Activated naive CD4-positive, alpha-beta T cell treated with anti-CD3 and anti-CD28 coated beads for 36 hours (primary cell): ENCODE measurements at regions of chr12 and their contacts with region 1.

Region 1: GRCh38 chr12:67698672-67699581 is 50.4 kb downstream of the DYRK2 start:
- DNase-seq: peak; percentile 74
- H3K4me3 Mint-ChIP-seq: peak overlapping the region; percentile 28
- H3K27ac Mint-ChIP-seq: peak overlapping the region; percentile 64
- H3K4me1 Mint-ChIP-seq: peaks cover 51% of the 10 kb centered on the region
- H3K27me3 Mint-ChIP-seq: no peaks in the 10 kb centered on the region

Region 2: GRCh38 chr12:67482751-67483671 is 215.9 kb before region 1 on chr12:
- CTCF ChIA-PET with region 1: no interaction called
- intact Hi-C with region 1: loop called (anchors 1 kb)
- DNase-seq: peak; percentile 95
- H3K4me3 Mint-ChIP-seq: no peak overlapping the region
- H3K27ac Mint-ChIP-seq: no peak overlapping the region
- H3K4me1 Mint-ChIP-seq: peaks cover 40% of the 10 kb centered on the region
- H3K27me3 Mint-ChIP-seq: no peaks in the 10 kb centered on the region

Region 3: GRCh38 chr12:67592216-67593011 is 106.5 kb before region 1 on chr12:
- CTCF ChIA-PET with region 1: no interaction called
- intact Hi-C with region 1: loop called (anchors 2 kb)
- DNase-seq: peak; percentile 32
- H3K4me3 Mint-ChIP-seq: no peak overlapping the region
- H3K27ac Mint-ChIP-seq: peak overlapping the region; percentile 22
- H3K4me1 Mint-ChIP-seq: peaks cover 49% of the 10 kb centered on the region
- H3K27me3 Mint-ChIP-seq: no peaks in the 10 kb centered on the region

Region 4: DNA sequence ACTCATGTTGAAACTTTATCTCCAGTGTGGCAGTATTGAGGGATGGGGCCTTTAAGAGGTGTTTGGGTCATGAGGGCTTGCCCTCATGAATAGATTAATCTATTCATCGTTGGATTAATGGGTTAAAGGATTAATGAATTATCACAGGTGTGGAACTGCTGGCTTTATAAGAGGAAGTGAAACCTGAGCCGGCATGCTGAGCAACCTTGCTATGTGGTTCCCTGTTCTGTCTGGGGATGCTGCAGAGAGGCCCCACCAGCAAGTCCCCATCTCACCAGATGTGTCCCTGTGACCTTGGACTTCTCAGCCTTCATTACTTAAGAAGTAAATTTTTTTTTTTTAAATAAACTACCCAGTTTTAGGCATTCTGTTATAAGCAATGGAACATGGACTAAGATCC is 59.2 kb after region 1 on chr12:
- CTCF ChIA-PET with region 1: no interaction called
- intact Hi-C with region 1: loop called (anchors 1 kb)
- DNase-seq: peak; percentile 9
- H3K4me3 Mint-ChIP-seq: no peak overlapping the region
- H3K27ac Mint-ChIP-seq: no peak overlapping the region
- H3K4me1 Mint-ChIP-seq: peaks cover 49% of the 10 kb centered on the region
- H3K27me3 Mint-ChIP-seq: no peaks in the 10 kb centered on the region

Region 5: DNA sequence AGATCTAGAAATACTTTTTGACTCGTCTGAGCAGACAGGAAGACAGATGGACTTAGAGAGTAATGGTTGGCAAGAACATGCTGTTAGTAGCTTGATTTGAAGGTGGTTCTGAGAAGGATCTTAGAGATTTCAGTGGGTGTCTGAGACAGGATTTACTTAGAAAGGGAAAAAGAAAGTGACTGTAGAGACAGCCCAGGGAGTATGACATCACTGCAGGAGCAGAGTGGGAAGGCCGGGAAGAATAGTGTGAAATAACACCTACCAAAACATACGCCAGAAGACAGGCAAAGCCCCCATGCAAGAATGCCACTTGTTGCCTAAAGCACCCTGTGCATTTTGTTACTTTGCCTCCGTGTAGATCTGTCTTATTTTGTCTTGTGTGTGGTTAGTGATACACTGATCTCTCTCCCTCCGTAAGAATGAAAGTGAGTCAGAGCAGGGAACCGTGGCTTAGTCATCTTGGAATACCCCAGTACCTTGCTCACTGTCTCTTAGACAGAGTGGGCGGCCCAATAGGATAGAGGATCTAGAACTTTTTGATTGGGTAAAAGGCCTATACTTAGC is 129.0 kb after region 1 on chr12:
- CTCF ChIA-PET with region 1: no interaction called
- intact Hi-C with region 1: loop called (anchors 1 kb)
- DNase-seq: peak; percentile 79
- H3K4me3 Mint-ChIP-seq: peak overlapping the region; percentile 30
- H3K27ac Mint-ChIP-seq: peak overlapping the region; percentile 65
- H3K4me1 Mint-ChIP-seq: peaks cover 11% of the 10 kb centered on the region
- H3K27me3 Mint-ChIP-seq: no peaks in the 10 kb centered on the region

Region 6: GRCh38 chr12:67919406-67919805 is 220.5 kb after region 1 on chr12:
- CTCF ChIA-PET with region 1: no interaction called
- intact Hi-C with region 1: no loop called
- DNase-seq: no peak
- H3K4me3 Mint-ChIP-seq: no peak overlapping the region
- H3K27ac Mint-ChIP-seq: no peak overlapping the region
- H3K4me1 Mint-ChIP-seq: peaks cover 6% of the 10 kb centered on the region
- H3K27me3 Mint-ChIP-seq: no peaks in the 10 kb centered on the region

Region 7: DNA sequence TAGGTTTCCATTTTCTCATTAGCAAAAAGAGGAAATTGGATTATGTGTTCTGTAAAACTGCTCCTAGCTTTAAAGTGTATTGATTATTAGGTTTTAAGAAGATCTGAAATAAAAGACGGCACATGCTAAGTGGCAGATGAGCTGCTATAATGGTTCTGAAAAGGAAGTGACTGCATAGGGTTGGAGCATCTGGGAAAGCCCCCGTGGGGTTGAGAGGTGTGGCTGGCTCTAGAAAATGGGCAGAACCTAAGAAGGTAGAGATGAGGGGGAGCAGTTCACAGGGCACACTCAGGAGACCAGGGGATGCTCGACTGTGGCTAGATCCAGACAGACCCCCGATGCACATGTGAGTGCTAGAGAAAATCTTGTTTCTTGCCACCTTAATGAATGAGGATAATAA is 292.2 kb after region 1 on chr12:
- CTCF ChIA-PET with region 1: no interaction called
- intact Hi-C with region 1: loop called (anchors 2 kb)
- DNase-seq: peak; percentile 74
- H3K4me3 Mint-ChIP-seq: peak overlapping the region; percentile 55
- H3K27ac Mint-ChIP-seq: peak overlapping the region; percentile 80
- H3K4me1 Mint-ChIP-seq: peaks cover 49% of the 10 kb centered on the region
- H3K27me3 Mint-ChIP-seq: peaks cover 2% of the 10 kb centered on the region

Region 8: DNA sequence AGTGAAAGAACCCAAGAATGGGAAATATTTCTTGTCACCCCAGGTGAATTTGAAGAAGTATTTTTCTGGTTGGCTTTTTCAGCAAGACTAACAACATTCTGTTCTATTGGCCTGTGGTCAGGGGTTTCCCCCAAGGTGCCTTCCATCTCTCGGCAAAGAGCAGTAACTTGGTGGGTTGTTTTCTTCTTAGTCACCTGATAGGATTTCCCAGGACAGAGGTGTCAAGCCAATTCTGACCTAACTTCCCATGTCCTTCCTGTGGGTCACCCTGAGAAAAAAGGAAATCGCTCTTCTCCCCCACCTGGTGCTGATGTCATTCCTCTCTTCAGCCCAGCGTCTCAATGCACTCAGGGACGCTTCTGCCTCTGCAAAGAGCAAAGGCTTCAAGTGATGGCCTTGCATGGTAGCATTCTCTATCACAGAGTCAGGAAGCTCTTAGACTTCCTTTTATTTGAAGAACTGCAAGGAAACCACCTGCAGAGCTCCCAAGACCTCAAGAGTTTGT is 476.7 kb after region 1 on chr12:
- CTCF ChIA-PET with region 1: no interaction called
- intact Hi-C with region 1: loop called (anchors 5 kb)
- DNase-seq: peak; percentile 87
- H3K4me3 Mint-ChIP-seq: peak overlapping the region; percentile 62
- H3K27ac Mint-ChIP-seq: peak overlapping the region; percentile 89
- H3K4me1 Mint-ChIP-seq: peaks cover 78% of the 10 kb centered on the region
- H3K27me3 Mint-ChIP-seq: no peaks in the 10 kb centered on the region